GM10248 (cell line): ENCODE measurements at regions of chr11 and their contacts with region 1.

Region 1: DNA sequence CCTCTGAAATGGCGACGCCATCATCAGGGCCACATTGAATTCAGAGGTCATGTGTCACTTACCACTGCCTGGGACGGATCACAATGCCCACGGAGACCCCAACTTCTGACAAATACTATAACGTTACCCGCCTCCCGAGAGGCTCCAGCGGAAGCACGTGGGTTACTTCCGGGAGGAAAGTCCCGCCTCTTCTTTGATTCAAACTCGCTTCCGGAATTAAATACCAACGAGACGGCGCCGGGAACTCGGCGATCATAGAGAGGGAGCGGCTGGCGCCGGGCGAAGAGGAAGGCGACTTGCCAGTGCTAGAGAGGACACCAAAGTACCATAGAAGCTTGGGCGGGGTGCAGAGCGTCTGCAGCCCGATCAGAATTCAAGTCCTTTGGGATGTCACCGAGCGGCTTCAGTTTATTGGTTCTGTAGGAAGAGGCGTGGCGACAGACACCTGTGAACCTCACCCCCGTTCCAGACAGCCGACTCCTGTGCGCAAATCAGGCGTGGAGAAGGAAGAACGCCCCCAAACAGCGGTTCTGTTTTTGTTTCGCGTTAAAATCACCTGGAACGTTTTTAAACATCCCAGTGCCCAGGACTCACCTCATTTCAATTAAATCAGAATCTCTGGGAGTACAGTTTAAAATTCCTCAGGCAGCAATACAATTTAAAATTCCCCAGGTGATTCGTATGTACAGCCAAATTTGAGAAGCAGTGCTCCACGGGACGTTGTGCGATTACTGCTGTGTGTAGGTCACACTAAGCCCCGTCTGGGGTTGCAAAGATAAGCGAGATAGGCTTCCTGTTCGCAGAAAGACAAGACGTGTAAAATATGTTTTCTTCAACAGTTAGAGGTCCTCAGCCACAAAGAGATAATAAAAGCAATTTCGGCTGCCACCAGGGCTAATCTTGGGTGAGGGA is at the start of gene TIMM10:
- DNase-seq: peak; percentile 92
- CTCF ChIP-seq: no peak

Region 2: GRCh38 chr11:57345555-57346211 is 185.2 kb before region 1 on chr11:
- CTCF ChIA-PET with region 1: interaction called, 13 read pairs
- POLR2A ChIA-PET with region 1: no interaction called
- DNase-seq: peak; percentile 80
- CTCF ChIP-seq: peak; percentile 80

Region 3: GRCh38 chr11:57387289-57388030 is 143.4 kb before region 1 on chr11:
- CTCF ChIA-PET with region 1: no interaction called
- POLR2A ChIA-PET with region 1: no interaction called
- DNase-seq: no peak
- CTCF ChIP-seq: no peak

Region 4: DNA sequence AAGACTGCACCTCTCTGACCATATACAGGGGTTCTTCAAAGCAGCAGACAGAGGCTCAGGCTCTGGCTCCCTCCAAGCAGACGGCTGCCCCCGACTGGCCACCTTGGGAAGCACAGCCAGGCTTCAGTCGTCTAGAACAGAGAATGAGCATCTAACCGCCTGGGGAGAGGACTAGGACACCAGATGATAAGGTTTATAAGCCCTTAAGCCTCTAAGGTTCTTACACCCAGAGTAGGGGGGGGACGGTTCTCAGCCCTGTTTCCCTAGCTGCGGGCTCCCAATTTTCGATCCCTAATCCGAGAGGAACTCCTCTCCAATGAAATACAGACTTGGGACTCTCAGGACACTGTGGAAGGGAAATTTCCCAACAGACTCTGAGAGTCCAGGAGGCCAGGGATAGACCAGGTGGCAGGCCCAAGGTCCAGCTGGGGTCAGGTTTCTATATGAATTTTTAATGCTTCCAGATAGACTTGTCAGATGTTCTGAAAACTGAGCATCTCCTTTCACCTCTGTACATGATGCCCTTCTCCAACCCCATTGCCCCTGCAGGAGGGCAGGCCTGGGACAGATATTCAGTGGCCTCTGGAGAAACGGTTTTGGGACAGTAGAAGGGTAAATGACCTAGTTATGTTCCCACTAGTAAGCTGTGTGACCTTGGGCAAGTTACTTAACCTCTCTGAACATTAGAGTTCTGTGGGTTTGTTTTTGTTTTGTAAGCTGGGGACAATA is 50.3 kb before region 1 on chr11:
- CTCF ChIA-PET with region 1: interaction called, 48 read pairs
- POLR2A ChIA-PET with region 1: no interaction called
- DNase-seq: peak; percentile 80
- CTCF ChIP-seq: peak; percentile 88

Region 5: GRCh38 chr11:57499413-57499982 is 31.4 kb before region 1 on chr11:
- CTCF ChIA-PET with region 1: interaction called, 247 read pairs
- POLR2A ChIA-PET with region 1: no interaction called
- DNase-seq: peak; percentile 81
- CTCF ChIP-seq: no peak

Region 6: DNA sequence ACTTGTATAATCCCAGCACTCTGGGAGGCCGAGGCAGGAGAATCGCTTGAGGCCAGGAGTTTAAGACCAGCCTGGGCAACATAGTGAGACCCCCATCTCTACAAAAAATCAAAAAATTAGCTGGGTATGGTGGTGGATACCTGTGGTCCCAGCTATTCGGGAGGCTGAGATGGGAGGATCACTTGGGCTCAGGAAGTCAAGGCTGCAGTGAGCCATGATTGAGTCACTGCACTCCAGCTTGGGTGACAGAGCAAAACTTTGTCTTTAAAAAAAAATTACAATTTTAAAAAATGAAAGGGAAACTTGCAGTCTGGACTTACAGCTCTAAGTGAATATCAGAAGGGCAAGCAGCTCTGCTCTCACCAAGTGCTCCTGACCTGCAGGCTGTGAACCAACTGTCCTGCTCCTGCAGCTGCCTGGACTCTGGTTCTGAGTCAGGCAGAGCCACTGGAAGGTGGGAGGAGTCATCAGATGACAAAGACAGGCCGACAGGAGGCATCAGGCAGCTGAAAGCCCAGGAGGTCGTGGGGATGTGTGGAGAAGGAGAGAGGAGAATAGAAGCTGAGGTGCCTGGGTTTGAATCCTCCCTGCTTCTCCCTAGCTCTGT is 16.1 kb after region 1 on chr11:
- CTCF ChIA-PET with region 1: interaction called, 40 read pairs
- POLR2A ChIA-PET with region 1: no interaction called
- DNase-seq: peak; percentile 73
- CTCF ChIP-seq: no peak